CD8-positive, alpha-beta T cell (primary cell): ENCODE measurements at regions of chr9 and their contacts with region 1.

Region 1: DNA sequence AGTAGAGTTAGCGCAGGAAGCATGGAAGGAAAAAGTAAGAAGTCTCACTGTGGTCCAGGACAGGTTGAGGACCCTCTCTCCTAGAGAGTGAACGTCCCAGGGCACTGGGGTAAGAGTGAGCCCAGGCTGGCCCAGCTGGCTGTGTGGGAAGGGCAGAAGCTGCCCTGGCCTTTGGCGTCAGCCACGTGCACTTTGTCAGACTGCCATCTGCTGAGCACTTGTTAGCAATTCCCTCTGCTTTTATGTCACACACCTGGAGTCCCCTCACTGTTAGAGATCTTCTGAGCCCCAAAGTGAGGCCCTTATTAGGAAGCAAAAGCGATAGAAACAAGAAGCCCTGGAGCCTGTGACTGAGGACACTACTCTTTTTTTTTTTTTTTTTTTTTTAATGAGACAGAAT is 79.1 kb downstream of the UGCG start:
- DNase-seq: peak in 3 of 9 experiments; percentile 8 to 45 (median 37)
- ATAC-seq: no peak
- H3K4me3 ChIP-seq: no peak overlapping the region
- H3K4me3 Mint-ChIP-seq: no peak overlapping the region
- H3K27ac ChIP-seq: no peak overlapping the region
- H3K27ac Mint-ChIP-seq: no peak overlapping the region
- H3K4me1 ChIP-seq: no peaks in the 10 kb centered on the region
- H3K4me1 Mint-ChIP-seq: peaks cover 7% of the 10 kb centered on the region
- H3K27me3 ChIP-seq: no peaks in the 10 kb centered on the region
- H3K27me3 Mint-ChIP-seq: no peaks in the 10 kb centered on the region
- CTCF ChIP-seq: no peak

Region 2: GRCh38 chr9:111759762-111760639 is 215.7 kb before region 1 on chr9:
- CTCF ChIA-PET with region 1: interaction called, 3 read pairs
- POLR2A ChIA-PET with region 1: no interaction called
- intact Hi-C with region 1: loop called (anchors 1 to 5 kb)
- DNase-seq: peak in 7 of 9 experiments; percentile 6 to 79 (median 41)
- ATAC-seq: peak; percentile 67
- H3K4me3 ChIP-seq: no peak overlapping the region
- H3K4me3 Mint-ChIP-seq: no peak overlapping the region
- H3K27ac ChIP-seq: no peak overlapping the region
- H3K27ac Mint-ChIP-seq: no peak overlapping the region
- H3K4me1 ChIP-seq: no peaks in the 10 kb centered on the region
- H3K4me1 Mint-ChIP-seq: peaks cover 4% of the 10 kb centered on the region
- H3K27me3 ChIP-seq: no peaks in the 10 kb centered on the region
- H3K27me3 Mint-ChIP-seq: no peaks in the 10 kb centered on the region
- CTCF ChIP-seq: peak; percentile 81

Region 3: GRCh38 chr9:111828193-111828592 is 147.5 kb before region 1 on chr9:
- CTCF ChIA-PET with region 1: interaction called, 4 read pairs
- POLR2A ChIA-PET with region 1: no interaction called
- intact Hi-C with region 1: loop called in 1 of 2 experiments (anchors 1 kb)
- DNase-seq: peak in 2 of 9 experiments; percentile 30 to 41
- ATAC-seq: no peak
- H3K4me3 ChIP-seq: no peak overlapping the region
- H3K4me3 Mint-ChIP-seq: no peak overlapping the region
- H3K27ac ChIP-seq: no peak overlapping the region
- H3K27ac Mint-ChIP-seq: no peak overlapping the region
- H3K4me1 ChIP-seq: no peaks in the 10 kb centered on the region
- H3K4me1 Mint-ChIP-seq: no peaks in the 10 kb centered on the region
- H3K27me3 ChIP-seq: peaks cover 0 to 3% of the 10 kb centered on the region in 2 experiments
- H3K27me3 Mint-ChIP-seq: no peaks in the 10 kb centered on the region
- CTCF ChIP-seq: no peak

Region 4: DNA sequence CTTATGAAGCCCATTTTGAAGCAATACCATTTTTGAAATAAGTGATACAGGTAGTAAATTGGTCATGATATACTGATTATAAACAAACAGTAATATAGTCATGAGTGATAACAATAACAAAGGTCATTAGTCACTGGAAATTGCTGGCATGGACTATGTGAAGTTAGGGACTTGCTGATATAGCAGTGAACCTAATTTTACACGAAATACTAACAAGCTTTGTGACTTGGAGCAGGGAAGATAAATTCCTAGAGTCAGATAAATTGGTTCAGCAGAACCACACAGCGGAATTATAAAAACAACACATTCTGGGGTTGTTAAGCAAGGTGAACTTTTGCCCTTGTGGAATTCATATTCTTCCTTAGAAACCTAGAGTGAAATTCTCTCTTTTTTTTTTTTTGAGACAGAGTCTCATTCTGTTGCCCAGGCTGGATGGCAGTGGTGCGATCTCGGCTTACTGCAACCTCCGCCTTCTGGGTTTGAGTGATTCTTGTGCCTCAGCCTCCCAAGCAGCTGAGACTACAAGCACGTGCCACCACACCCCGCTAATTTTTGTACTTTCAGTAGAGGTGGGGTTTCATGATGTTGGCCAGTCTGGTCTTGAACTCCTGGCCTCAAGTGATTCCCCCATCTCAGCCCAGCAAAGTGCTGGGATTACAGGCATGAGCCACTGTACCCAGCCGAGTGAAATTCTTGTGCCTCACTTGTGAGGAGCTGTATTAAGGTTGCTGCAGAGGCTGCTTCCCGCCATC is 73.1 kb before region 1 on chr9:
- CTCF ChIA-PET with region 1: no interaction called
- POLR2A ChIA-PET with region 1: no interaction called
- intact Hi-C with region 1: no loop called
- DNase-seq: no peak
- ATAC-seq: no peak
- H3K4me3 ChIP-seq: no peak overlapping the region
- H3K4me3 Mint-ChIP-seq: no peak overlapping the region
- H3K27ac ChIP-seq: no peak overlapping the region
- H3K27ac Mint-ChIP-seq: no peak overlapping the region
- H3K4me1 ChIP-seq: peaks cover 49% of the 10 kb centered on the region
- H3K4me1 Mint-ChIP-seq: peaks cover 31% of the 10 kb centered on the region
- H3K27me3 ChIP-seq: no peaks in the 10 kb centered on the region
- H3K27me3 Mint-ChIP-seq: no peaks in the 10 kb centered on the region
- CTCF ChIP-seq: no peak

Region 5: DNA sequence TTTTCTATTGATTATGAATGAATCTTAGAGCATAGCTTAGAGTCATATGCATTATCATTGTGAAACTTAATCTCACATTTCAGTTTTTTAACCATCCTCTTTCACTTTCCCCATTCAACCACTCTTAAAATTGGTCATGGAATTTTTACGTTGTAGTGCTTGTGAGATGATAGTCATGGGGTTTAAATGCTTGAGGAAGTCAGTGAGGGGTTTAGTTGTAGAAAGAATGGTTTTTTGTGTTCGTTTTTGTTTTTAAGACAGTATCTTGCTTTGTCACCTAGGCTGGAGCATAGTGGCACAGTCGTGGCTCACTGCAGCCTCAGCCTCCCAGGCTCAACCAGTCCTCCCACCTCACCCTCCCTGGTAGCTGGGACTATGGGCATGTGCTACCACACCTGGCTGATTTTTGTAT is 59.5 kb before region 1 on chr9:
- CTCF ChIA-PET with region 1: no interaction called
- POLR2A ChIA-PET with region 1: no interaction called
- intact Hi-C with region 1: no loop called
- DNase-seq: no peak
- ATAC-seq: no peak
- H3K4me3 ChIP-seq: no peak overlapping the region
- H3K4me3 Mint-ChIP-seq: peak overlapping the region; percentile 37
- H3K27ac ChIP-seq: peak overlapping the region in 1 of 2 experiments; percentile 1
- H3K27ac Mint-ChIP-seq: peak overlapping the region; percentile 19
- H3K4me1 ChIP-seq: peaks cover 38% of the 10 kb centered on the region
- H3K4me1 Mint-ChIP-seq: peaks cover 55% of the 10 kb centered on the region
- H3K27me3 ChIP-seq: no peaks in the 10 kb centered on the region
- H3K27me3 Mint-ChIP-seq: no peaks in the 10 kb centered on the region
- CTCF ChIP-seq: no peak

Region 6: DNA sequence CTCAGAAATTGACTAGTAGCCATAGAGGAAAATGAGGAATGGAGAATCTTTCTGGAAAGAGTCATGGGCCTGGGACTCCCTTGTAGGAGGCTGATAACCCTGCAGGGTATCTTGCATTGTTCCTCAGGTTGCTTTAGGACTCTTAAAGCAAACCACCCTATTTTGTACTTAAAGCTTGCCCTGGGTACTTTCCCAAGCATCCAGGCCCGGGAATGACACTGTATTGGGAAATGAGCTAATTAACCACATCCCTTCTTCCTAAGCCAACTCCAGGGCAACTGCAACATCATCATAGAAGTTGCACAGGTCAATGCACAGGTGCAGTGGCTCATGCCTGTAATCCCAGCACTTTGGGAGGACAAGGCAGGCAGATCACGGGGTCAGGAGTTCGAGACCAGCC is 23.1 kb before region 1 on chr9:
- CTCF ChIA-PET with region 1: interaction called, 3 read pairs
- POLR2A ChIA-PET with region 1: no interaction called
- intact Hi-C with region 1: loop called in 1 of 2 experiments (anchors 2 kb)
- DNase-seq: no peak
- ATAC-seq: no peak
- H3K4me3 ChIP-seq: no peak overlapping the region
- H3K4me3 Mint-ChIP-seq: no peak overlapping the region
- H3K27ac ChIP-seq: no peak overlapping the region
- H3K27ac Mint-ChIP-seq: no peak overlapping the region
- H3K4me1 ChIP-seq: no peaks in the 10 kb centered on the region
- H3K4me1 Mint-ChIP-seq: peaks cover 12% of the 10 kb centered on the region
- H3K27me3 ChIP-seq: no peaks in the 10 kb centered on the region
- H3K27me3 Mint-ChIP-seq: no peaks in the 10 kb centered on the region
- CTCF ChIP-seq: no peak

Region 7: GRCh38 chr9:112020680-112021596 is 45.2 kb after region 1 on chr9:
- CTCF ChIA-PET with region 1: no interaction called
- POLR2A ChIA-PET with region 1: no interaction called
- intact Hi-C with region 1: no loop called
- DNase-seq: no peak
- ATAC-seq: no peak
- H3K4me3 ChIP-seq: no peak overlapping the region
- H3K4me3 Mint-ChIP-seq: no peak overlapping the region
- H3K27ac ChIP-seq: no peak overlapping the region
- H3K27ac Mint-ChIP-seq: no peak overlapping the region
- H3K4me1 ChIP-seq: no peaks in the 10 kb centered on the region
- H3K4me1 Mint-ChIP-seq: no peaks in the 10 kb centered on the region
- H3K27me3 ChIP-seq: no peaks in the 10 kb centered on the region
- H3K27me3 Mint-ChIP-seq: peaks cover 4% of the 10 kb centered on the region
- CTCF ChIP-seq: no peak